Endothelial cell of umbilical vein (primary cell): ENCODE measurements at regions of chr1 and their contacts with region 1.

Region 1: GRCh38 chr1:30085811-30086770 is 637.3 kb downstream of the MATN1 start:
- DNase-seq: peak; percentile 17
- H3K4me3 ChIP-seq: no peak overlapping the region
- H3K27ac ChIP-seq: no peak overlapping the region
- H3K4me1 ChIP-seq: peaks cover 17% of the 10 kb centered on the region
- H3K27me3 ChIP-seq: no peaks in the 10 kb centered on the region
- CTCF ChIP-seq: peak; percentile 52 to 64
- POLR2A ChIP-seq: no peak

Region 2: GRCh38 chr1:29341936-29342335 is 744.2 kb before region 1 on chr1:
- CTCF ChIA-PET with region 1: no interaction called
- POLR2A ChIA-PET with region 1: no interaction called
- dilution Hi-C with region 1: no loop called
- intact Hi-C with region 1: loop called (anchors 1 kb)
- DNase-seq: no peak
- H3K4me3 ChIP-seq: no peak overlapping the region
- H3K27ac ChIP-seq: no peak overlapping the region
- H3K4me1 ChIP-seq: no peaks in the 10 kb centered on the region
- H3K27me3 ChIP-seq: peaks cover 0 to 2% of the 10 kb centered on the region in 2 experiments
- CTCF ChIP-seq: no peak
- POLR2A ChIP-seq: no peak

Region 3: GRCh38 chr1:29698033-29698432 is 388.1 kb before region 1 on chr1:
- CTCF ChIA-PET with region 1: no interaction called
- POLR2A ChIA-PET with region 1: no interaction called
- dilution Hi-C with region 1: no loop called
- intact Hi-C with region 1: loop called (anchors 2 kb)
- DNase-seq: no peak
- H3K4me3 ChIP-seq: no peak overlapping the region
- H3K27ac ChIP-seq: no peak overlapping the region
- H3K4me1 ChIP-seq: no peaks in the 10 kb centered on the region
- H3K27me3 ChIP-seq: peaks cover 0 to 4% of the 10 kb centered on the region in 2 experiments
- CTCF ChIP-seq: peak; percentile 36 to 50
- POLR2A ChIP-seq: no peak

Region 4: GRCh38 chr1:29793101-29793546 is 293.0 kb before region 1 on chr1:
- CTCF ChIA-PET with region 1: interaction called, 31 read pairs
- POLR2A ChIA-PET with region 1: no interaction called
- dilution Hi-C with region 1: no loop called
- intact Hi-C with region 1: loop called (anchors 1 kb)
- DNase-seq: peak; percentile 72
- H3K4me3 ChIP-seq: no peak overlapping the region
- H3K27ac ChIP-seq: no peak overlapping the region
- H3K4me1 ChIP-seq: no peaks in the 10 kb centered on the region
- H3K27me3 ChIP-seq: no peaks in the 10 kb centered on the region
- CTCF ChIP-seq: peak; percentile 75 to 87
- POLR2A ChIP-seq: no peak

Region 5: GRCh38 chr1:29912425-29912824 is 173.7 kb before region 1 on chr1:
- CTCF ChIA-PET with region 1: no interaction called
- POLR2A ChIA-PET with region 1: no interaction called
- dilution Hi-C with region 1: no loop called
- intact Hi-C with region 1: loop called (anchors 1 kb)
- DNase-seq: peak; percentile 6
- H3K4me3 ChIP-seq: no peak overlapping the region
- H3K27ac ChIP-seq: no peak overlapping the region
- H3K4me1 ChIP-seq: no peaks in the 10 kb centered on the region
- H3K27me3 ChIP-seq: no peaks in the 10 kb centered on the region
- CTCF ChIP-seq: peak; percentile 8 to 13
- POLR2A ChIP-seq: no peak

Region 6: GRCh38 chr1:30043731-30044408 is 42.2 kb before region 1 on chr1:
- CTCF ChIA-PET with region 1: no interaction called
- POLR2A ChIA-PET with region 1: no interaction called
- dilution Hi-C with region 1: no loop called
- intact Hi-C with region 1: no loop called
- DNase-seq: no peak
- H3K4me3 ChIP-seq: no peak overlapping the region
- H3K27ac ChIP-seq: no peak overlapping the region
- H3K4me1 ChIP-seq: no peaks in the 10 kb centered on the region
- H3K27me3 ChIP-seq: no peaks in the 10 kb centered on the region
- CTCF ChIP-seq: no peak
- POLR2A ChIP-seq: no peak

Region 7: DNA sequence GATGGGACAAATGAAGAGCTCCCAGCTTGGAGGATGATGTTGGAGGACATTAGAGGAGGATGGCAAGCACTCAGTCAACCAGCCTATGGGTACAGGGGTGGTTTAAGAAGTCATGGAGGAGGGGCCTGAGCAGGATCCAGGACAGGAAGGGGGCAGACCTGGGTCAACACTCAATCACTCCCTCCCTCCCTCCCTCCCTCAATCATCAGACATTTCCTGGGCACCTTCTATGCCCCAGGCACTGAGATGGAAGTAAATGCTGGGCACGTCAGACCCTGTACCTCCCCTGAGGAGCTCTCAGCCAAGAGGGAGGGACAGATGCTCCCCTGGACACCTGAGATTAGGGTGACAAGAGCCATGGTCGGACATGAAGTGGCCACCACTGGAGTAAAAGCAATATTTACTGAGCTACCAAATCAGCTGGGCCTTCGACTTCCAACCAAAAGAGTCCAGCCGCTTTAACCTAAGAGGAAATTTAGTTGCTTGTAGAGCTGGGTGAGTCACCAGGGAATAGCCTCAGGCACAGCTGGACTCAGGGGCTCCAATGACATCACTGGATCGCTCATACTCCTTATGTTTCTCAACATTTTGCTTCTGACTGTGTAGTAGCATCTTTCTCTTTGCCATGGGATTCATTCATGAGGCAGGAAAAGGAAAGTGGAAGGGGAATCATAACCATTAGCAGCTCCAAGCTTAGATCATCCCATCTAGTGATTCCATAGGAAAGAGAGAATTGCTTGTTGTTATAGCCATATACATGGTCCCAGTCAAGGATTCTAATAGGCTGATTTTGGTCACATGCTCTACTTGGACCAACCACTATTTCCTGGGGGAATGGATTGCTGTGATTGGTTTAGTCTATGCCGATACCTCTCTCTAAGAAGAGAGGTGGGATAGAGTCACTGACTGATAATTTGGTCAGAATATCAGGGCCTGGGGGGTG is 27.2 kb before region 1 on chr1:
- CTCF ChIA-PET with region 1: no interaction called
- POLR2A ChIA-PET with region 1: no interaction called
- dilution Hi-C with region 1: no loop called
- intact Hi-C with region 1: no loop called
- DNase-seq: no peak
- H3K4me3 ChIP-seq: no peak overlapping the region
- H3K27ac ChIP-seq: no peak overlapping the region
- H3K4me1 ChIP-seq: no peaks in the 10 kb centered on the region
- H3K27me3 ChIP-seq: no peaks in the 10 kb centered on the region
- CTCF ChIP-seq: no peak
- POLR2A ChIP-seq: no peak

Region 8: DNA sequence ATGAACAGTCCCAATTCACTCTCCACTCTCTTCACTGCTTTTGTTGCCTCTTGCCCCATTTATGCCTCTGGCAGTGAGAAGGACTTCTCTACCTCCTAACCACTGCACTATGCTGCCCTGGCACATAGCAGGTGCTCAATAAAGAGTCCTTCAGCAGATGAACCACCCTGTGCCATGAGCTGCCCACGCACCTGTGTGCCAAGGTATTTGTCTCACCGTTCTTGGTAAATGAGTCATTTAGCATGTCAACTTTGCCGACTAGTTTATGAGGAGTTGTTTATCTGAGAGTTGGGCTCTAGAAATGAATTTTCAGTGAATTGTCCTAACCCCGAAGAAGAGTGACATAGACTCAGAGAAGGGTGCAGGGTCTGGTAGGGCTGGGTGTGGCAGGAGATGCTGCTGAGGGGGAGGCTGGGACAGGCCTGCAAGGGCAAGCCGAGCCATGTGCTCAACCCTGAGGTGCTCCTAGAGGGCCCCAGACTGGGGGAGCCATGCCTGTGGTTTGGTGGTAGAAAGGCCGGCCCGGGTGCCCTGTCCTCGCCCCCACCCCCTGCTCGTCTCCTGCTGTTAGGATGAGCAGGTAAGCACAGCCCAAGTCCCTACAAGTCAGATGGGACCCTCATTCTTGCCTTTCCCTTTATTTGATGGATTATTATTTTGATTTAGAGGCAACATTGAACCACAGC is 17.2 kb before region 1 on chr1:
- CTCF ChIA-PET with region 1: no interaction called
- POLR2A ChIA-PET with region 1: no interaction called
- dilution Hi-C with region 1: no loop called
- intact Hi-C with region 1: no loop called
- DNase-seq: no peak
- H3K4me3 ChIP-seq: no peak overlapping the region
- H3K27ac ChIP-seq: no peak overlapping the region
- H3K4me1 ChIP-seq: no peaks in the 10 kb centered on the region
- H3K27me3 ChIP-seq: no peaks in the 10 kb centered on the region
- CTCF ChIP-seq: no peak
- POLR2A ChIP-seq: no peak

Region 9: GRCh38 chr1:30101477-30102227 is 15.6 kb after region 1 on chr1:
- CTCF ChIA-PET with region 1: no interaction called
- POLR2A ChIA-PET with region 1: no interaction called
- dilution Hi-C with region 1: no loop called
- intact Hi-C with region 1: no loop called
- DNase-seq: no peak
- H3K4me3 ChIP-seq: no peak overlapping the region
- H3K27ac ChIP-seq: no peak overlapping the region
- H3K4me1 ChIP-seq: no peaks in the 10 kb centered on the region
- H3K27me3 ChIP-seq: no peaks in the 10 kb centered on the region
- CTCF ChIP-seq: no peak
- POLR2A ChIP-seq: no peak

Region 10: GRCh38 chr1:30707412-30708360 is 621.6 kb after region 1 on chr1:
- CTCF ChIA-PET with region 1: interaction called, 3 read pairs
- POLR2A ChIA-PET with region 1: no interaction called
- dilution Hi-C with region 1: no loop called
- intact Hi-C with region 1: loop called (anchors 1 kb)
- DNase-seq: peak; percentile 50
- H3K4me3 ChIP-seq: no peak overlapping the region
- H3K27ac ChIP-seq: no peak overlapping the region
- H3K4me1 ChIP-seq: no peaks in the 10 kb centered on the region
- H3K27me3 ChIP-seq: peaks cover 0 to 3% of the 10 kb centered on the region in 2 experiments
- CTCF ChIP-seq: peak; percentile 84 to 88
- POLR2A ChIP-seq: no peak